Activated B cell treated with CpG ODN at 0.5 μM for 24 hours (primary cell): ENCODE measurements at regions of chr2 and their contacts with region 1.

Region 1: GRCh38 chr2:177263451-177264208 is 897 bp downstream of the NFE2L2 start:
- DNase-seq: peak; percentile 97
- ATAC-seq: peak; percentile 53
- H3K4me3 Mint-ChIP-seq: peak overlapping the region; percentile 97
- H3K27ac Mint-ChIP-seq: peak overlapping the region; percentile 100
- H3K4me1 Mint-ChIP-seq: peaks cover 59% of the 10 kb centered on the region
- H3K27me3 Mint-ChIP-seq: no peaks in the 10 kb centered on the region
- CTCF ChIP-seq: no peak

Region 2: GRCh38 chr2:176885671-176886070 is 378.0 kb before region 1 on chr2:
- CTCF ChIA-PET with region 1: no interaction called
- POLR2A ChIA-PET with region 1: no interaction called
- intact Hi-C with region 1: no loop called
- DNase-seq: no peak
- ATAC-seq: no peak
- H3K4me3 Mint-ChIP-seq: no peak overlapping the region
- H3K27ac Mint-ChIP-seq: no peak overlapping the region
- H3K4me1 Mint-ChIP-seq: no peaks in the 10 kb centered on the region
- H3K27me3 Mint-ChIP-seq: peaks cover 4% of the 10 kb centered on the region
- CTCF ChIP-seq: no peak

Region 3: DNA sequence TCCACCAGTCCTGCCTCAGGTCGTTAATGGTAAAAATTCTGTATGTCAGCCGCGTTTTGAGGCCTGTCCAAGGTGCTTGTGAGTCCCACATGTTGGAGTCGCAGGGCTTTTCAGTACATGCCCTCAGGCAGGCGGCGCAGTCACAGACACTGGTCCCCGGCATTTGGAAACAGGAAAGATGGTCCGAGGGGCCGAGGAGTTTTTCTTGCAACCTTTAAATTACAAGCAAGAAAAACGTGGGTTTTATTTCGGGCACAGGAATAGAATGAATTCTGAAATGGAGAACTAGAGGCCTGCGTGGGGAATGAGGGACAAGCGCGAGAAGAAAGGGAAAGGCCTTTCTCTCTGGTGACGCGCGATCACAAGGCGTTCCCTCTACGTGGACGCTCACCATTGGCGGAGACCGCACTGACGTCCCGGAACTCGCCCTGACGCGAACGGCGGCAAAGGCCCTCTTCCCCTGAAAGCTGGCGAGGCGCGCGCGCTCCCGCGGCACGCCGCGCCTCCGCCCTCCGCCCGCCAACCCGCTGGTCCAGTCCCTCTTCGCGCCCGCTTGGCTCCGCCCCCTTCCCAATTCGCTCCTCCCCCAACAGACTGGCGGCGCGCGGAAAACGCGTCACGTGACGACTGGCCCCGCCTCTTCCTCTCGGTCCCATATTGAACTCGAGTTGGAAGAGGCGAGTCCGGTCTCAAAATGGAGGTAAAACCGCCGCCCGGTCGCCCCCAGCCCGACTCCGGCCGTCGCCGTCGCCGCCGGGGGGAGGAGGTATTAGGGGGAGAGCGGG is 51.3 kb before region 1 on chr2 and contains the start of gene HNRNPA3:
- CTCF ChIA-PET with region 1: interaction called, 13 read pairs
- POLR2A ChIA-PET with region 1: interaction called, 212 read pairs
- intact Hi-C with region 1: loop called (anchors 1 kb)
- DNase-seq: peak; percentile 100
- ATAC-seq: peak; percentile 86
- H3K4me3 Mint-ChIP-seq: peak within 1 kb of the TSS; percentile 95
- H3K27ac Mint-ChIP-seq: peak within 1 kb of the TSS; percentile 100
- H3K4me1 Mint-ChIP-seq: peaks cover 48% of the 10 kb centered on the region
- H3K27me3 Mint-ChIP-seq: no peaks in the 10 kb centered on the region
- CTCF ChIP-seq: no peak
- total RNA-seq, gene HNRNPA3: 254 and 275 TPM in 2 replicates

Region 4: GRCh38 chr2:177239932-177240630 is 23.5 kb before region 1 on chr2:
- CTCF ChIA-PET with region 1: interaction called, 29 read pairs
- POLR2A ChIA-PET with region 1: interaction called, 65 read pairs
- intact Hi-C with region 1: loop called (anchors 1 kb)
- DNase-seq: no peak
- ATAC-seq: peak; percentile 84
- H3K4me3 Mint-ChIP-seq: peak overlapping the region; percentile 49
- H3K27ac Mint-ChIP-seq: peak overlapping the region; percentile 70
- H3K4me1 Mint-ChIP-seq: peaks cover 74% of the 10 kb centered on the region
- H3K27me3 Mint-ChIP-seq: no peaks in the 10 kb centered on the region
- CTCF ChIP-seq: no peak

Region 5: GRCh38 chr2:177289824-177290628 is 26.4 kb after region 1 on chr2:
- CTCF ChIA-PET with region 1: interaction called, 41 read pairs
- POLR2A ChIA-PET with region 1: interaction called, 100 read pairs
- intact Hi-C with region 1: loop called (anchors 1 kb)
- DNase-seq: no peak
- ATAC-seq: peak; percentile 85
- H3K4me3 Mint-ChIP-seq: peak overlapping the region; percentile 19
- H3K27ac Mint-ChIP-seq: peak overlapping the region; percentile 20
- H3K4me1 Mint-ChIP-seq: peaks cover 11% of the 10 kb centered on the region
- H3K27me3 Mint-ChIP-seq: no peaks in the 10 kb centered on the region
- CTCF ChIP-seq: no peak

Region 6: GRCh38 chr2:177392373-177393202 is 129.0 kb after region 1 on chr2 and contains the start of gene AGPS:
- CTCF ChIA-PET with region 1: interaction called, 3 read pairs
- POLR2A ChIA-PET with region 1: interaction called, 26 read pairs
- intact Hi-C with region 1: loop called (anchors 2 kb)
- DNase-seq: peak; percentile 66
- ATAC-seq: peak; percentile 93
- H3K4me3 Mint-ChIP-seq: peak within 1 kb of the TSS; percentile 92
- H3K27ac Mint-ChIP-seq: peak within 1 kb of the TSS; percentile 69
- H3K4me1 Mint-ChIP-seq: peaks cover 42% of the 10 kb centered on the region
- H3K27me3 Mint-ChIP-seq: no peaks in the 10 kb centered on the region
- CTCF ChIP-seq: no peak
- total RNA-seq, gene AGPS: 29.0 and 29.9 TPM in 2 replicates

Region 7: GRCh38 chr2:177618255-177619253 is 354.9 kb after region 1 on chr2:
- CTCF ChIA-PET with region 1: no interaction called
- POLR2A ChIA-PET with region 1: interaction called, 4 read pairs
- intact Hi-C with region 1: loop called (anchors 1 kb)
- DNase-seq: peak; percentile 87
- ATAC-seq: peak; percentile 89
- H3K4me3 Mint-ChIP-seq: peak overlapping the region; percentile 97
- H3K27ac Mint-ChIP-seq: peak overlapping the region; percentile 100
- H3K4me1 Mint-ChIP-seq: peaks cover 7% of the 10 kb centered on the region
- H3K27me3 Mint-ChIP-seq: peaks cover 3% of the 10 kb centered on the region
- CTCF ChIP-seq: no peak

Region 8: GRCh38 chr2:178478439-178479274 is 1215.0 kb after region 1 on chr2 and contains the start of gene FKBP7:
- CTCF ChIA-PET with region 1: no interaction called
- POLR2A ChIA-PET with region 1: interaction called, 4 read pairs
- intact Hi-C with region 1: loop called (anchors 2 kb)
- DNase-seq: peak; percentile 69
- ATAC-seq: peak; percentile 70
- H3K4me3 Mint-ChIP-seq: peak within 1 kb of the TSS; percentile 94
- H3K27ac Mint-ChIP-seq: peak within 1 kb of the TSS; percentile 97
- H3K4me1 Mint-ChIP-seq: peaks cover 43% of the 10 kb centered on the region
- H3K27me3 Mint-ChIP-seq: no peaks in the 10 kb centered on the region
- CTCF ChIP-seq: no peak
- total RNA-seq, gene FKBP7: 0.44 and 0.64 TPM in 2 replicates